ENCODE measurements at regions of chr15 and their contacts with region 1.

Region 1: DNA sequence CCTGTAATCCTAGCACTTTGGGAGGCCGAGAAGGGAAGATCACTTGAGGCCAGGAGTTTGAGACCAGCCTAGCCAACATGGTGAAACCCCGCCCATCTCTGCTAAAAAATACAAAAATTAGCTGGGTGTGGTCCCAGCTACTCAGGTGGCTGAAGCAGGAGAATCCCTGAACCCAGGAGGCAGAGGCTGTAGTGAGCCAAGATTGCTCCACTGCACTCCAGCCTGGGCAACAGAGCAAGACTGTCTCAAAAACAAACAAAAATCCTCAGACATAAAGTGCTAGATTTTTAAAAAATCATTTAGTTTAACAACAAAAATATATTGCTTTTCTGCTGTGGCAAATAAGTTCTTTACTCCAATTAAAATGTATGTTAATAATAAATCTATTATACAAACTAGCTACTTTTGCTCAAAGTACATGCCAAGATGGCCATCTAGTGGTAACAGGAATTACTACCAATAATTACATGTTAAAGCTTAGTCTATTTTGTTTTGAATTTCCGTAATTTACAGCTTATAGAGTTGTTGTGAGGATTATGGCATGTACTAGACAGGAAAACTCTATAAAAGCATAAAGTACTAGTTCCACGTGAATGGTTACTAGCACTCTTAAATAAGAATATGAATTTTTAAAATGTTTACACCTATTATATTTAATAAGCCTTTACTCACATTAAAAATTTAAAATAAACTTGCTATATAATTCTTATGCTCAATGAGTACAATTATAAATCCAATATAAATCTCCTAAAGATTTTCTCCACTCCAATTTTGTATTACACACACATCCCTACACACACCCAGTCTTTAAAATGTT is 39.0 kb downstream of the GABPB1 start:
- DNase-seq: peak; percentile 47
- CTCF ChIP-seq: peak; percentile 60

Region 2: DNA sequence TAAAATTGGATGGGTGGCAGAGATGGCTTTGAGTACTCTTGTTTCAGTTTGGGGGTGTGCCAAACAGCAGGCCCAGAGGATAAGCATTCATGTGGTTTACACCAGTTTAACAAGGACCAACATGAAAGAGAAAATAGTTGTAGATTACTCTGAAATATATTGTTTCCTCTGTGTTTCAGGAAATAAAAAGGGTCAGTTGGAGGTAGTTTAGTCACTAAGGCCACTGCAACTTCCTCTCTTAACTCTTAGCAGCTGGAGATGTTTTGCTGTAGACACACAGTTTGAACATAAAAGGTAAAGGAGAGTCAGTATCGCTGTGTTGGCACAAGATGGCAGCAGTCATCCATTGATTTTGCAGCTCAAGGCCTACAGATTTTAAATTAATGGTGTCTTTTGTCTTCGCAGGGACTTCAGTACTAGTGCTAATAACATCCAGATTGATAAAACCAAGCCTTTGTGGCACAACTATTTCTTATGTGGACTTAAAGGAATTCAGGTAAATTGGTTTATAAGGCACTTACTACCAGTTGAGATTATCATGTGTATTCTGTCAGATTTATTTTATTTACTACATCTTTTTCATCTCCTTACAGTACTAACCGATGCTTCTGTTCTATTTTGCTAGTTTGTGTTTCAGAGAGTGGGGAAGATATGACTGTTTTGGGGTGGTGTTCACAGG is 1080.4 kb before region 1 on chr15:
- CTCF ChIA-PET with region 1: interaction called, 12 read pairs
- POLR2A ChIA-PET with region 1: no interaction called
- DNase-seq: peak; percentile 37
- CTCF ChIP-seq: peak; percentile 72

Region 3: GRCh38 chr15:50075319-50075718 is 240.7 kb before region 1 on chr15:
- CTCF ChIA-PET with region 1: no interaction called
- POLR2A ChIA-PET with region 1: no interaction called
- DNase-seq: no peak
- CTCF ChIP-seq: no peak

Region 4: GRCh38 chr15:50182219-50183013 is 133.6 kb before region 1 on chr15:
- CTCF ChIA-PET with region 1: interaction called, 34 read pairs
- POLR2A ChIA-PET with region 1: no interaction called
- DNase-seq: peak; percentile 71
- CTCF ChIP-seq: no peak

Region 5: DNA sequence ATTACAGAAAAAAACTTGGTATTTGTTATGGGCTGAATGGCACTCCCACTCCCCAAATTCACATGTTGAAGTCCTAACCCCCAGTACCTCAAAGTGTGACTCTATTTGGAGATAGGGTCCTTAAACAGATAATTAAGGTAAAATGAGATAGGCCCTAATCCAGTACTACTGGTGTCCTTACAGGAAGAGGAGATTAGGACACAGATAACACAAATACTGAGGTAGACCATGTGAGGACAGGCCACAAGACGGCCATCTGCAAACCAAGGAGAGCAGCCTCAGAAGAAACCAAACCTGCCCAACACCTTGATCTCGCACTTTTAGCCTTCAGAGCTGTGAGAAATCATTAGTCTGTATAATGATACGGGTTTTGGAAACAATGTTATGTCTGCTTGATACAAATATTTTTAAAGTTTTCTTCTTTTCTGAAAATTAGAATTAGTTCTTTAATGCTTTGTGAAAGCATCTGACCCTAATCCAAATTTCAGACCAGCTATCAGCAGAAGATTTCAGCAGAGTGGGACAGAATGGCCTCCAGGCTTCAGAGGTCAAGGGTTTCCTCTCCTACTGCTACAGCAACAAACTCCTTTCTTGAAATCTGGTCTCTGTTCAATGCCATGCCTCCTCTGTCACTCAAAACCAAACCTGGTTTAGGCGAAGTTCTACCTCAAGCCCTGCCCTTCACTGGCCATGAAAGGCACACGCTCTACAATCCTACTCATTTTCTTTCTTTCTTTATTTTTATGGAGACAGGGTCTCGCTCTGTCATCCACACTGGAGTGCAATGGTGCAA is 28.5 kb before region 1 on chr15:
- CTCF ChIA-PET with region 1: interaction called, 10 read pairs
- POLR2A ChIA-PET with region 1: no interaction called
- DNase-seq: no peak
- CTCF ChIP-seq: no peak

Region 6: GRCh38 chr15:50302581-50302980 is 13.4 kb before region 1 on chr15:
- CTCF ChIA-PET with region 1: interaction called, 15 read pairs
- POLR2A ChIA-PET with region 1: no interaction called
- DNase-seq: peak; percentile 50
- CTCF ChIP-seq: no peak

Region 7: DNA sequence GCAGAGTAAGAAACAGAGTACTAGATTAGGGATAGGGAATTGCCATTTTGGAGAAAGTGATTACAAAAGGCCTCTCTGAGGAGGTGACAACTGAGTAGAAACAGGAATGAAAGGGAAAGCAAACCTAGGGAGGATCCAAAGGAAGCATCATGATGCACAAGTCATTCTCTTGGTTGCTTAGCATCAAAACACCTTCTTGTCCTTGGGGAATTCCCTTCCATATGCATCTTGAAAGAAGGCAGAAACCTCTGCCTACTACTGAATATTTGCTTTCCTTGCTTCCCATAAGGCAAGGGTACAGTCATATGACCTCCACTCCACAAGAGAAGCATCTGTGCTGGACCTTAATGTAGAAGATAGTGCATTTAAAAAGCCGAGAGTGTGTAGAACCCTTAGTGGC is 14.9 kb after region 1 on chr15:
- CTCF ChIA-PET with region 1: interaction called, 19 read pairs
- POLR2A ChIA-PET with region 1: no interaction called
- DNase-seq: peak; percentile 35
- CTCF ChIP-seq: no peak

Region 8: DNA sequence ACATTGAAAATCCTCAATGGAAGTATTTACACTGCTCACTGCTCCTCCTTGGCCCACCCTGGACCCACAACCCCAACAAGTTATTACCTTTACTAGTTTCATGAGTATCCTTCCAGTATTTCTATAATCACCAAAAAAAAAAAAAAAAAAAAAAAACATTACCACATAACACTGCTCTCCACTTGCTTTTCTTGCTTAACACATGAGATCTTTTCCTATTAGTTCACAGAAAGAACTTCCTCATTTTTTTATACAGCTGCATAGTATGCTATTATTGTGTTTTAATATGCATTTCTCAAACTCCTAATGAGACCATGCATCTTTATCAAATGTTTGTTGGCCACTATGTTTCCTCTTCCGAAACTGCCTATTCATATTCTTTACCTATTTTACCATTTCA is 24.4 kb after region 1 on chr15:
- CTCF ChIA-PET with region 1: interaction called, 12 read pairs
- POLR2A ChIA-PET with region 1: no interaction called
- DNase-seq: no peak
- CTCF ChIP-seq: no peak

Measured in GM10248 (cell line).